ENCODE measurements at regions of chr12 and their contacts with region 1.

Region 1: DNA sequence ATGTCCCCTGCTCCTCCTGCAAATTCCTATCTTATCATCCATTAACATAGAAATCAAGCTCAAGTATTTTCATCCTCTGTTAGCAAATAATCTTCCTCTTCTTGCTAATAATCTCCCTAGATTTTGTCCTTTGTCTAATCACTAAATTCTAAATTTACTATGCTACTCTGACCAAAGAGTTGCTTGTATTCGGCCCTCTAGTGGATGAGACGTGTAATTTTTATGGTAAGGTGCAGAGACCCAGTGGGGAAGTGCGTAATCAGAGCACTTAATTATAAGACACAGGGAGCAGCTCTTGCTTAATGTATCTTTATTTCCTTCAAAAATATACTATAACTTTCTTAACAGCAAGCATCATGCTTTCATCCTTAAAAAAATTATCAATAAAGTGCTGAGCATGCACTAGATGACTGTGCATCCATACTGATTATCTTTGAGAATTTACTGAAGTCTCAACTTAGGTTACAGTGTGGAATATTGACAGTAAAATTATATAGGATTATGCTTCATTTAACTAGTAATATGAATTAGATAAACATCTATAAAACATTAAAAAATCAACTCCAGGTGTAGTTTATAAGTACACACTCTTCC is 212.6 kb downstream of the SLC16A7 start:
- DNase-seq: no peak
- ATAC-seq: peak; percentile 72
- H3K4me3 Mint-ChIP-seq: no peak overlapping the region
- H3K27ac Mint-ChIP-seq: no peak overlapping the region
- H3K4me1 Mint-ChIP-seq: peaks cover 2% of the 10 kb centered on the region
- H3K27me3 Mint-ChIP-seq: no peaks in the 10 kb centered on the region
- CTCF ChIP-seq: peak; percentile 74

Region 2: GRCh38 chr12:59403259-59403932 is 405.0 kb before region 1 on chr12:
- CTCF ChIA-PET with region 1: interaction called, 27 read pairs
- POLR2A ChIA-PET with region 1: no interaction called
- intact Hi-C with region 1: loop called (anchors 1 kb)
- DNase-seq: no peak
- ATAC-seq: peak; percentile 45
- H3K4me3 Mint-ChIP-seq: no peak overlapping the region
- H3K27ac Mint-ChIP-seq: no peak overlapping the region
- H3K4me1 Mint-ChIP-seq: no peaks in the 10 kb centered on the region
- H3K27me3 Mint-ChIP-seq: peaks cover 2% of the 10 kb centered on the region
- CTCF ChIP-seq: no peak

Region 3: DNA sequence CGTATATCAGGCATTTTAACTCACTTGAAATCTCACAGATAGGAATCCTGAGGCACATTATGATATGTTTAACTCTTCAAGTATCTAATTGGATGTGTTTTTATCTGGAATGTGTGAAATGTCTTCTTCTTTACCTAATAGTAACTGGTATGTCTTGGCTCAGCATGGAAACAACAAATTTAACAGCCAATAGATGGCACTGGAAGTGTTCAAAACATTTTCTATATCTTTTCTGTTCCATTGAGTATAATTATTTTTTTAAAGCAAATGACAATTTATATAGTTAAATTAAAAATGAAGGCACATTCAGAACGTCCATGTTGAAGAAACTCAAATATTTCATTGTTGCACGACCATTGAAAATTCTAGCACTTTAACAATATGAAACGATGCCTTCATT is 377.1 kb before region 1 on chr12:
- CTCF ChIA-PET with region 1: interaction called, 4 read pairs
- POLR2A ChIA-PET with region 1: no interaction called
- intact Hi-C with region 1: loop called (anchors 1 kb)
- DNase-seq: no peak
- ATAC-seq: no peak
- H3K4me3 Mint-ChIP-seq: no peak overlapping the region
- H3K27ac Mint-ChIP-seq: no peak overlapping the region
- H3K4me1 Mint-ChIP-seq: no peaks in the 10 kb centered on the region
- H3K27me3 Mint-ChIP-seq: no peaks in the 10 kb centered on the region
- CTCF ChIP-seq: no peak

Region 4: GRCh38 chr12:59444932-59445331 is 363.5 kb before region 1 on chr12:
- CTCF ChIA-PET with region 1: interaction called, 12 read pairs
- POLR2A ChIA-PET with region 1: no interaction called
- intact Hi-C with region 1: loop called (anchors 1 kb)
- DNase-seq: no peak
- ATAC-seq: no peak
- H3K4me3 Mint-ChIP-seq: no peak overlapping the region
- H3K27ac Mint-ChIP-seq: no peak overlapping the region
- H3K4me1 Mint-ChIP-seq: no peaks in the 10 kb centered on the region
- H3K27me3 Mint-ChIP-seq: no peaks in the 10 kb centered on the region
- CTCF ChIP-seq: no peak

Region 5: DNA sequence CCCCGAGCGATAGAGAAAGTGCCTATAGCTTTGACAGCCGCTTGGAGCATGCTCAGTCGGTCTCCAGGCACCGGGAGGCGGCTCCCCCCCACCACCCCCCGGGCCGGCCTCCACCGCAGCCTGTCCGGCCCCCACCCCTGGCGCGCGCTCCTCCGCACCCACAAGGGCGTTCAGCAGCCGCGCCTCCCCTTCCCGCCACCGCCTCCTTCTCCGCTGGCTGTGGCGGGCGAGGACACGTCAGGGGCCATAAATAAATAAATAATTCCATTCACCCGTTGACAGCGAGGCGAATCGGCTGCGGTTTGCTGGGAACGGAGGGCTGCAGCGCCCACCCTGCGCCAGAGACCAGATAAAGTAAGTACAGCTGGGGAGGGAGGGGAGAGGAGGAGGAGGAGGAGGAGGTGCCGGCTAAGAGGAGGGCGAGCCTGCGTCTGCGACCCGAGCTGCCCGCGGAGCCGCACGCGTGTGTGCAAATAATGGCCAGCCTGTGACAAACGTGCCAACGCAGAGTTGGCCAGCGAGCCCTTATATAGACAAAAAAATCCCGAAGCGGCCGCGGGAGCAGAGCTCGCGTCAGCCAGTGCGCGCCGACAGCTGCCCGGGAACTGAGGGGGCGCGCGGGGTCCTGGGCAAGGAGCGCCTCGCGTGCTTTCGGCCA is 212.4 kb before region 1 on chr12 and contains the start of gene SLC16A7:
- CTCF ChIA-PET with region 1: interaction called, 6 read pairs
- POLR2A ChIA-PET with region 1: no interaction called
- intact Hi-C with region 1: loop called (anchors 1 kb)
- DNase-seq: peak; percentile 73
- ATAC-seq: peak; percentile 67
- H3K4me3 Mint-ChIP-seq: peak within 1 kb of the TSS; percentile 92
- H3K27ac Mint-ChIP-seq: peak within 1 kb of the TSS; percentile 99
- H3K4me1 Mint-ChIP-seq: peaks cover 38% of the 10 kb centered on the region
- H3K27me3 Mint-ChIP-seq: no peaks in the 10 kb centered on the region
- CTCF ChIP-seq: no peak
- total RNA-seq, gene SLC16A7: 20.4 and 22.4 TPM in 2 replicates

Region 6: DNA sequence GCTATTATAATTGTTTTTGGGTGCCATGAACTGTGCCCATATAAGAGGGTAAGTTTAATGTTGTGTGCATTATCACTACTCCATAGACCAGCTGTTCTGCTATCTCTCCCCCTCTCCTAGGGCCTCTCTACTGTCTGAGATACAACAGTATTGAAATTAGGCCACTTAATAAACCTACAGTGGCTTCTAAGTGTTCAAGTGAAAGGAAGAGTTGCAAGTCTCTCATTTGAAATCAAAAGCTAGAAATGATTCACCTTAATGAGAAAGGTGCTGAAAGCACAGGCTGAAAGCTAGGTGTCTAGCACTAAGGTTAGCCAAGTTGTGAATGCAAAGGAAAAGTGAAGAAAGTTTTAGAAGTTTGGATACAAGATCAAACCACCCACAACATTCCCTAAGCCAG is 44.6 kb before region 1 on chr12:
- CTCF ChIA-PET with region 1: no interaction called
- POLR2A ChIA-PET with region 1: no interaction called
- intact Hi-C with region 1: no loop called
- DNase-seq: no peak
- ATAC-seq: no peak
- H3K4me3 Mint-ChIP-seq: no peak overlapping the region
- H3K27ac Mint-ChIP-seq: no peak overlapping the region
- H3K4me1 Mint-ChIP-seq: no peaks in the 10 kb centered on the region
- H3K27me3 Mint-ChIP-seq: no peaks in the 10 kb centered on the region
- CTCF ChIP-seq: no peak

Region 7: GRCh38 chr12:59820594-59821011 is 12.2 kb after region 1 on chr12:
- CTCF ChIA-PET with region 1: interaction called, 15 read pairs
- POLR2A ChIA-PET with region 1: no interaction called
- intact Hi-C with region 1: no loop called
- DNase-seq: no peak
- ATAC-seq: no peak
- H3K4me3 Mint-ChIP-seq: no peak overlapping the region
- H3K27ac Mint-ChIP-seq: no peak overlapping the region
- H3K4me1 Mint-ChIP-seq: no peaks in the 10 kb centered on the region
- H3K27me3 Mint-ChIP-seq: peaks cover 1% of the 10 kb centered on the region
- CTCF ChIP-seq: no peak